ENCODE measurements at regions of chr11 and their contacts with region 1.

Region 1: GRCh38 chr11:114586797-114587196 is 8.8 kb downstream of the NXPE4 start:
- DNase-seq: no peak
- H3K4me3 ChIP-seq: no peak overlapping the region
- H3K27ac ChIP-seq: no peak overlapping the region
- H3K4me1 ChIP-seq: no peaks in the 10 kb centered on the region
- H3K27me3 ChIP-seq: no peaks in the 10 kb centered on the region
- CTCF ChIP-seq: no peak
- EP300 ChIP-seq: no peak
- POLR2A ChIP-seq: no peak

Region 2: DNA sequence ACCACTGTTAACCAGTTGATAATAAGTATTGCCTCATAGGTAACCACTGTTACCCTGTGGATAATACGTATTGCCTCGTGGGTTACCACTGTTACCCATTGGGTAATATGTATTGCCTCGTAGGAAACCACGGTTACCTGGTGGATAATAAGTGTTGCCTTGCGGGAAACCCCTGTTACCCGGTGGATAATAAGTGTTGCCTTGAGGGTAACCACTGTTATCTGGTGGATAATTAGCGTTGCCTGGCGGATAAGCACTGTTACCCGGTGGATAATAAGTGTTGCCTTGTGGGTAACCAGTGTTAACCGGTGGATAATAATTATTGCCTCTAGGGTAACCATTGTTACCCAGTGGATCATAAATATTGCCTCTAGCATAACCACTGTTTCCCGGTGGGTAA is 36.1 kb after region 1 on chr11:
- intact Hi-C with region 1: loop called in 1 of 4 experiments (anchors 5 kb)
- DNase-seq: no peak
- H3K4me3 ChIP-seq: no peak overlapping the region
- H3K27ac ChIP-seq: no peak overlapping the region
- H3K4me1 ChIP-seq: no peaks in the 10 kb centered on the region
- H3K27me3 ChIP-seq: no peaks in the 10 kb centered on the region
- CTCF ChIP-seq: no peak
- EP300 ChIP-seq: no peak
- POLR2A ChIP-seq: no peak

Region 3: DNA sequence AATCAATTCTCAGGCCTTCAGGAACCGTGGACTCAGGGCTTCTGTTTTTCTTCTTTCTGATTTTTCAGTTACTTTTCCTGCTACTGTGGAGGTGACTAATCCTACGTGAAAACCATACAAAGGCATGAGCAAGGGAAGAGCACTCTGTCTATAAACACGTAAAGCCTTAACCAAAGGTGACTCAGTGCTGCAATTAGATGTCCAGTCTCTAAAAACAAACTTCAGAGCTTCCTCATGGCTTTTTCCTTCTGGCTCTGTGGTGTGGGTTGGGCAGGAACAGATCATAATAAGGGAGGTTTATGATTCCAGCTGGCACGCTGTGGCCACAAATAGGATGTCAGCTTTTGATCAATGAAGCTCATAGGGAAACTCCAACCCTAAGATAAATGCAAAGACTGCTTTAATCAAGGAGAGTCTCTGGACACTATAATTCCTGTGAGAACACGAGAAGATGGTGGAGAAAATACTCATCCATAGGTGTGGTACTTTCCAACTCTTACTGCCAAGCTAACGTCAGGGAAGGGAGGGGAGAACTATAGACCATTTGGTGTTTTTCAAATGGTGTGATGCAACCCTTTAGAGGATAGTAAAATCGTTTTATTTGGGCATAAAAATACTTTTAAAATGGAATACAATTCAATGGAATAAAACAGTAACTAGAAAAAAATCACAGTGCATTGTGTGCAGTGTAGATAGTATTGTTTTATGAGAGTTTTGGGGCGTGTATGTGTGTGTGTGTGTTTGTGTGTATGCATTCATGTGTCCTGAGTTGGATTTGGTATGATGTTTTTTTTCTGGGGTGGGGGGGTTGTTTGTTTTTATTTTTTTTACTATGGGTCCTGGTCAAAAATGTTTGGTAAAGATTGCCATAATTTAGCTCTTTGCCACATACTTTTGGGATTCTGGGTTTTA is 91.6 kb after region 1 on chr11 and contains the start of gene NXPE2:
- intact Hi-C with region 1: no loop called
- DNase-seq: no peak
- H3K4me3 ChIP-seq: no peak within 1 kb of the TSS
- H3K27ac ChIP-seq: no peak within 1 kb of the TSS
- H3K4me1 ChIP-seq: no peaks in the 10 kb centered on the region
- H3K27me3 ChIP-seq: no peaks in the 10 kb centered on the region
- CTCF ChIP-seq: no peak
- EP300 ChIP-seq: no peak
- POLR2A ChIP-seq: no peak
- total RNA-seq, gene NXPE2: 0.28 to 1.5 (median 0.55) TPM